CD14-positive monocyte (primary cell): ENCODE measurements at regions of chr3 and their contacts with region 1.

Region 1: DNA sequence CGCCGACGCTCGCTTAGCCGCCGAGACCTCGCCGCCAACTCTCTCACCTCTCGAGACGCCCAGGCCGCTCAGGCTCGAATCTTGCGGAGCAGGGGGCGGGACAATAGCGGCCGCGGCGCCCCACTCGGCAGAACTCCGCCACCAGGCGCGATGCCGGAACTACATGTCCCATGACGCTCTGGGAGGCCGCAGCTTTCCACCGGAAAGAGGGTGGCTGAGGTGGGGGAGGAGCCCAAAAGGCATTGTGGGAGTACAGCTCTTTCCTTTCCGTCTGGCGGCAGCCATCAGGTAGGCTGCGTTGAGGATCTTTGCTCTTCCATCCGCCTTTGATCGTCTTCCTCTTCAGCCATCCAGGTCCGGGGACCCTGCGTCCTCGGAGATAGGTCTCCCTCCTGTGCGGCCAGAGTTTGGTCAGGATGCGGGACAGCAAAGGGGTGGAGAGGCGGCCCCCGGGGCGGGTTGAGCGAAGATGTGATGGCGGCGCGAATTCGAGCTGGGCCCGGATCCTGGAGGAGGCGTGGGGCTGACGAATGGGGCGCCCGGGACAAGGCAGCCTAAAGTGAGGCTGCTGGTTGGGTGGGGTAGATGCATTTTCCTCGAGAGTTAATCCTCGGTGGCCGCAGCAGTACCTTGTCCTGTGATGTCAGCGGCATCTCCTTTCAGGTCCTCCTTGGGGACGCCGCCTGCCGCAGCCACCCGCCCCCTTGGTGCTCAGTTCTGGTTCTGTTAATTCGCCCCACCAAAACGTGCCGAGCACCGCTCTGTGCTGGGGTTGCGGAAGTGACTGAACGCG is at the starts of genes NKIRAS1 and RPL15:
- DNase-seq: peak; percentile 94 to 96 (median 95)
- H3K4me3 ChIP-seq: peak within 1 kb of the TSS; percentile 91 to 100 (median 100)
- H3K4me3 Mint-ChIP-seq: peak within 1 kb of the TSS; percentile 96 to 97
- H3K27ac ChIP-seq: peak within 1 kb of the TSS; percentile 94
- H3K27ac Mint-ChIP-seq: peak within 1 kb of the TSS; percentile 93 to 97 (median 95)
- H3K4me1 ChIP-seq: peaks cover 26 to 33% of the 10 kb centered on the region in 2 donors
- H3K4me1 Mint-ChIP-seq: peaks cover 43% of the 10 kb centered on the region
- H3K27me3 ChIP-seq: no peaks in the 10 kb centered on the region
- H3K27me3 Mint-ChIP-seq: peaks cover 8 to 11% (median 10%) of the 10 kb centered on the region in 3 donors
- CTCF ChIP-seq: peak; percentile 63
- polyA plus RNA-seq, gene NKIRAS1: 0.69 to 2.0 (median 1.9) TPM
- polyA plus RNA-seq, gene RPL15: 2,510 to 3,161 (median 2,781) TPM

Region 2: GRCh38 chr3:23968463-23969184 is 51.5 kb after region 1 on chr3:
- intact Hi-C with region 1: loop called in 1 of 2 experiments (anchors 10 kb)
- DNase-seq: peak; percentile 15 to 75 (median 53)
- H3K4me3 ChIP-seq: no peak overlapping the region
- H3K4me3 Mint-ChIP-seq: no peak overlapping the region
- H3K27ac ChIP-seq: no peak overlapping the region
- H3K27ac Mint-ChIP-seq: peak overlapping the region in 1 of 7 donors; percentile 28
- H3K4me1 ChIP-seq: no peaks in the 10 kb centered on the region
- H3K4me1 Mint-ChIP-seq: peaks cover 3% of the 10 kb centered on the region
- H3K27me3 ChIP-seq: no peaks in the 10 kb centered on the region
- H3K27me3 Mint-ChIP-seq: no peaks in the 10 kb centered on the region
- CTCF ChIP-seq: no peak

Region 3: DNA sequence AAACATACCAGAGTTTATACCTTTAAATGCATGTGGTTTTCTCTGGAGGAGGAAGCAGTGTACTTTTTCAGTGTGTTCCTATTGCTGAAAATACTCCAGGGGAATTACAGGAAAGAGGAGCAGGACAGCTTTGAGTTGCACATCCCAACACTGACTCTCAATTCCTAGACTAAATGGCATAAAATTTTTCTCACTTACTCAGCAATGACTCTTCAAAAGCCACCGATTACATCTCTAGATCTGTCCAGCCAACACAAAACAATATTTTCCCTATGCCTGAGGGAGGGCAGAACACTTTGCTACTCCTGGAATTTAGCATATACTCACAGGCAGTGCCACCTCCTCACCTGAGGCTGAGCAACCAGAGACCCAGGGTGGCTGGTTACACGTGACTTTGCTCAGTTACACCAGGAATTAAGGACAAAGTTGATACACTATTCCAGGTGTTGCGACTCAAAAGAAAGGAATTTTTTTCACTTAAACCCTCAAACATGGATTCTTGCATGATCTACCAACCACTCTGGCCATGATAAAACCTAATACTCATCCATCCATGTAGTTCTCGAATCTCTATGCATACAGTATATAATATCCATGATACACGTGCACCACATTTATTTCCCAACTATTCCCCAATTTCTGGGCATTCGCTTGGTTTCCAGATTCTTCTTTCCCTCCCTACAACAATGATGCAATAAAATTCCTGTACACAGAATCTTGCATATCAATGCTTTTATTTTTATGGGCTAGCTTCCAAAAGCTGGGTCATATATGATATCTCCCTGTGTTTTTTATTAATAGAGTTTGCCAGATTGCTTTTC is 382.9 kb after region 1 on chr3:
- intact Hi-C with region 1: no loop called
- DNase-seq: no peak
- H3K4me3 ChIP-seq: no peak overlapping the region
- H3K4me3 Mint-ChIP-seq: no peak overlapping the region
- H3K27ac ChIP-seq: no peak overlapping the region
- H3K27ac Mint-ChIP-seq: no peak overlapping the region
- H3K4me1 ChIP-seq: no peaks in the 10 kb centered on the region
- H3K4me1 Mint-ChIP-seq: no peaks in the 10 kb centered on the region
- H3K27me3 ChIP-seq: no peaks in the 10 kb centered on the region
- H3K27me3 Mint-ChIP-seq: peaks cover 0 to 1% (median 0%) of the 10 kb centered on the region in 3 donors
- CTCF ChIP-seq: no peak